GM12878 (cell line): ENCODE measurements at regions of chr12 and their contacts with region 1.

Region 1: GRCh38 chr12:112924986-112925385 is 13.3 kb upstream of the OAS3 start:
- DNase-seq: peak; percentile 36
- ATAC-seq: peak; percentile 92
- H3K4me3 ChIP-seq: no peak overlapping the region
- H3K27ac ChIP-seq: no peak overlapping the region
- H3K4me1 ChIP-seq: no peaks in the 10 kb centered on the region
- H3K27me3 ChIP-seq: no peaks in the 10 kb centered on the region
- CTCF ChIP-seq: no peak
- EP300 ChIP-seq: no peak
- POLR2A ChIP-seq: no peak
- RAD21 ChIP-seq: no peak

Region 2: GRCh38 chr12:112906712-112907414 is 18.1 kb before region 1 on chr12 and contains the start of gene OAS1:
- CTCF ChIA-PET with region 1: interaction called, 31 read pairs
- POLR2A ChIA-PET with region 1: interaction called, 40 read pairs
- RAD21 ChIA-PET with region 1: interaction called, 44 read pairs
- SMC1A ChIA-PET with region 1: interaction called, 52 read pairs
- in situ Hi-C with region 1: no loop called
- intact Hi-C with region 1: loop called (anchors 2 kb)
- DNase-seq: peak; percentile 89
- ATAC-seq: peak; percentile 87
- H3K4me3 ChIP-seq: peak within 1 kb of the TSS; percentile 85
- H3K27ac ChIP-seq: peak within 1 kb of the TSS; percentile 93
- H3K4me1 ChIP-seq: peaks cover 22% of the 10 kb centered on the region
- H3K27me3 ChIP-seq: no peaks in the 10 kb centered on the region
- CTCF ChIP-seq: no peak
- EP300 ChIP-seq: no peak
- POLR2A ChIP-seq: peak; percentile 85
- RAD21 ChIP-seq: no peak
- polyA plus RNA-seq, gene OAS1: 88.9 to 117 TPM

Region 3: DNA sequence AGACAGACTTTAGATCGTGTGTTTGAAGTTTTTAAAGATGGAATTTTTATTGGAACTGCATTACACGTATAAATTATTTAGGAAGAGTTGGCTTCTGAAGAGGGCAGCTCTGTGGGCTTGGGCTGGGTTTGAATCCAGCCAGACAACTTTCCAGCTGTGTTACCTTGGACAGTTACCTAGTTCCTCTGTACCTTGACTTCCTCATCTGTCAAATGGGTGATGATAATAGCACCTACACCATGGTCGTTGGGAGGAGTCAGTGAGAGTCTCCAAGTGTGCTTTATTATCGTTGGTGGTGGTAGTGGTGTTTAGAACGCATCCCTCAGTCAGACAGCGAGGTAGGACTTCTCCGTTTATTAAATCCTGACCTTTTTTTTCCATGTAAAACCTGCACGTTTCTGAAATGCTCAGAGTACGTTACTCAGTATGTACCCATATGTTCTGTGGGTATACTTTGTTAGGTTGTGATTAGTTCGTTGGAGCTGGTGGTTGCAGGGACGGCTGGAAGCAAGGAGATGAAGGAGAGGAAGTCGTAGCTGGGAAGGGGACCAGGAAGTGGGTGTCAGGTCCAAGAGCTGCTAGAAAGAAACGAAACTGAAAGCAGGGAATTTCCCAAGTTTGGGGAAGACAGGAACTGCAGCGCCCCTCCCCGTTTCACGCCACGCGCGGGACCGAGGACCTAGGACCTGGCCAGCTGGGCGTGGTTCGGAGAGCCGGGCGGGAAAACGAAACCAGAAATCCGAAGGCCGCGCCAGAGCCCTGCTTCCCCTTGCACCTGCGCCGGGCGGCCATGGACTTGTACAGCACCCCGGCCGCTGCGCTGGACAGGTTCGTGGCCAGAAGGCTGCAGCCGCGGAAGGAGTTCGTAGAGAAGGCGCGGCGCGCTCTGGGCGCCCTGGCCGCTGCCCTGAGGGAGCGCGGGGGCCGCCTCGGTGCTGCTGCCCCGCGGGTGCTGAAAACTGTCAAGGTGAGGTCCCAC is 13.0 kb after region 1 on chr12 and contains the start of gene OAS3:
- CTCF ChIA-PET with region 1: interaction called, 16 read pairs
- POLR2A ChIA-PET with region 1: interaction called, 16 read pairs
- RAD21 ChIA-PET with region 1: interaction called, 14 read pairs
- SMC1A ChIA-PET with region 1: interaction called, 17 read pairs
- in situ Hi-C with region 1: no loop called
- intact Hi-C with region 1: no loop called
- DNase-seq: peak; percentile 45
- ATAC-seq: peak; percentile 81
- H3K4me3 ChIP-seq: peak within 1 kb of the TSS; percentile 70
- H3K27ac ChIP-seq: peak within 1 kb of the TSS; percentile 67
- H3K4me1 ChIP-seq: peaks cover 8% of the 10 kb centered on the region
- H3K27me3 ChIP-seq: no peaks in the 10 kb centered on the region
- CTCF ChIP-seq: 0 out of 6 replicates have a peak, but pooled peaks of 1 of the 3 experiments have one; percentile 3
- EP300 ChIP-seq: no peak
- POLR2A ChIP-seq: peak; percentile 49; the same call in 1 of the 2 replicates
- RAD21 ChIP-seq: no peak
- polyA plus RNA-seq, gene OAS3: 5.1 to 5.9 TPM

Region 4: GRCh38 chr12:112944028-112944690 is 19.2 kb after region 1 on chr12:
- CTCF ChIA-PET with region 1: interaction called, 11 read pairs
- POLR2A ChIA-PET with region 1: no interaction called
- RAD21 ChIA-PET with region 1: interaction called, 7 read pairs
- SMC1A ChIA-PET with region 1: interaction called, 17 read pairs
- in situ Hi-C with region 1: no loop called
- intact Hi-C with region 1: no loop called
- DNase-seq: no peak
- ATAC-seq: no peak
- H3K4me3 ChIP-seq: no peak overlapping the region
- H3K27ac ChIP-seq: no peak overlapping the region
- H3K4me1 ChIP-seq: peaks cover 8% of the 10 kb centered on the region; the same call in 1 of the 2 replicates
- H3K27me3 ChIP-seq: no peaks in the 10 kb centered on the region
- CTCF ChIP-seq: no peak
- EP300 ChIP-seq: no peak
- POLR2A ChIP-seq: no peak
- RAD21 ChIP-seq: no peak

Region 5: DNA sequence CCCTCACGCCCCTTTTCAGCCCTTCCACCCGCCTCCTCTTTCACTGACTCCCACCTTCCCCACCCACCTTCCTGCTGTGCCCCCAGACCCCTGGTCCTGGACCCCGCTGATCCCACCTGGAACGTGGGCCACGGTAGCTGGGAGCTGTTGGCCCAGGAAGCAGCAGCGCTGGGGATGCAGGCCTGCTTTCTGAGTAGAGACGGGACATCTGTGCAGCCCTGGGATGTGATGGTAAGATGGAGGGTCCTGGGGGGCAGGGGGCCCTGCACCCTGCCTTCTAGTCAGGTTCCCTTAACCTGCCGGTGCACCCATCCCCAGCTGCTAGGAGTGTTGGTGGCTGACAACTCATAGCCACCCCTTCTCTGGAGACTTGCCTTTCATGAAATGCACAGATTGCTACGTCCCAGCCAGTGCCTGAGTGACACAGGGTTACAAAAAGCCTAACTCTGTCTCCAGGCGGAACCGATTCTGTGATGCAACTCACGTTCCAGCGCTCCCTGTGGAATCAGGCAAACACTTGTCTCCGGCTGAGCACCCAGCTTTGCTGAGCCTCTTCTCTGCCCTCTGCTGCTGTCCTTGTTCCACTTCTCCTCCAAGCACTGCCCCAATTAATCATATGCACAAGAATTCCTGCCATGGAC is 38.4 kb after region 1 on chr12:
- CTCF ChIA-PET with region 1: no interaction called
- POLR2A ChIA-PET with region 1: no interaction called
- RAD21 ChIA-PET with region 1: no interaction called
- SMC1A ChIA-PET with region 1: no interaction called
- in situ Hi-C with region 1: no loop called
- intact Hi-C with region 1: no loop called
- DNase-seq: no peak
- ATAC-seq: no peak
- H3K4me3 ChIP-seq: no peak overlapping the region
- H3K27ac ChIP-seq: no peak overlapping the region
- H3K4me1 ChIP-seq: no peaks in the 10 kb centered on the region; the same call in 1 of the 2 replicates
- H3K27me3 ChIP-seq: no peaks in the 10 kb centered on the region
- CTCF ChIP-seq: no peak
- EP300 ChIP-seq: no peak
- POLR2A ChIP-seq: no peak
- RAD21 ChIP-seq: no peak

Region 6: GRCh38 chr12:112978163-112979040 is 53.4 kb after region 1 on chr12 and contains the start of gene OAS2:
- CTCF ChIA-PET with region 1: interaction called, 16 read pairs
- POLR2A ChIA-PET with region 1: interaction called, 25 read pairs
- RAD21 ChIA-PET with region 1: interaction called, 19 read pairs
- SMC1A ChIA-PET with region 1: interaction called, 20 read pairs
- in situ Hi-C with region 1: no loop called
- intact Hi-C with region 1: no loop called
- DNase-seq: peak; percentile 94
- ATAC-seq: peak; percentile 92
- H3K4me3 ChIP-seq: peak within 1 kb of the TSS; percentile 97
- H3K27ac ChIP-seq: peak within 1 kb of the TSS; percentile 100
- H3K4me1 ChIP-seq: peaks cover 13% of the 10 kb centered on the region
- H3K27me3 ChIP-seq: no peaks in the 10 kb centered on the region
- CTCF ChIP-seq: no peak
- EP300 ChIP-seq: peak in 1 of 2 experiments; percentile 11; a peak in 1 of 4 replicates
- POLR2A ChIP-seq: peak; percentile 88
- RAD21 ChIP-seq: no peak
- polyA plus RNA-seq, gene OAS2: 32.4 to 43.4 TPM